ENCODE measurements at regions of chr12 and their contacts with region 1.

Region 1: DNA sequence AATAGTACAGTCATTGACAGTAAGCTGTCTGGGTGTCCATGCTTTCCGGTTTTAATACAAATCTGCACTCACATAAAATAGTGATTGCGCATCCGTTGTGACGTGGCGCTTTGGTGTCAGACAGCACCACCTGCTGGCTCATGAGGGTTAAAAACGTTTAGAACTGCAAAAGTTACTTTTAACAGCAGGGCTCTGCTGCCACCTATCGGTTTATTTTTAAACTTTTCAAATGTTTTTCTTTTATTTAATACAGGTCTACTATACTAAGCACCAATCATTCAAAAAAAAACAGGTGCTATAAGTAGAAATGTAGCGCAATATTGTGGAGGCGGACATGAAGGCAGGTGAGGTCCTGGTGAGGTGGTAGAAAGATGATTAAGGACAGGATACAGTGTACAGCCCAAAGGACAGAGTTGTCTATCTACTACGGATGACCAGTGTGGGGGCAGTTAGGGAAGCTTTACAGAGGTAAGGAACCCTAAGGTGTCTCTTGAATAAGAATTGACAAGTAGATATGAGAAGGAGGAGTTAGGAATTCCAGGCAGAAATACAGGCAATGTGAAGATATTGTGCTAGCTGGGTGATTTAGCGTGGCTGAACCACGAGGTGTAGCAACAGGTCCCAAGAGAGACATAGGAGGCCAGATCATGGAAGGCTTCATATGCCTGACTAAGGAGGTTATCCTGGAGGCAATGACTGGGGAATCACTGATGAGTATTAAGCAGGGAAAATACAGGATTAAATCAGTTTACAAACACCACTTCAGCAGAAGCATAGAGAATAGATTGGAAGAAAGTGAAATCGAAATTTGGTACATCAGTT is 91.5 kb upstream of the PRB2 start:
- DNase-seq: peak; percentile 62 to 90
- ATAC-seq: peak; percentile 80 to 85
- H3K4me3 ChIP-seq: no peak overlapping the region
- H3K27ac ChIP-seq: no peak overlapping the region
- H3K4me1 ChIP-seq: no peaks in the 10 kb centered on the region
- CTCF ChIP-seq: peak; percentile 100
- EP300 ChIP-seq: no peak
- POLR2A ChIP-seq: no peak
- RAD21 ChIP-seq: peak; percentile 97 to 98

Region 2: GRCh38 chr12:10759657-10760056 is 727.2 kb before region 1 on chr12:
- CTCF ChIA-PET with region 1: interaction called, 16 read pairs
- POLR2A ChIA-PET with region 1: no interaction called
- DNase-seq: no peak
- ATAC-seq: no peak
- H3K4me3 ChIP-seq: no peak overlapping the region
- H3K27ac ChIP-seq: no peak overlapping the region
- H3K4me1 ChIP-seq: no peaks in the 10 kb centered on the region
- CTCF ChIP-seq: no peak
- EP300 ChIP-seq: no peak
- POLR2A ChIP-seq: no peak
- RAD21 ChIP-seq: no peak

Region 3: GRCh38 chr12:10771132-10771733 is 715.6 kb before region 1 on chr12:
- CTCF ChIA-PET with region 1: interaction called, 131 read pairs
- POLR2A ChIA-PET with region 1: no interaction called
- DNase-seq: peak; percentile 15 to 44
- ATAC-seq: peak; percentile 68 to 69; a peak in 3 of 6 replicates
- H3K4me3 ChIP-seq: no peak overlapping the region
- H3K27ac ChIP-seq: no peak overlapping the region
- H3K4me1 ChIP-seq: no peaks in the 10 kb centered on the region
- CTCF ChIP-seq: peak; percentile 79
- EP300 ChIP-seq: no peak
- POLR2A ChIP-seq: no peak
- RAD21 ChIP-seq: peak; percentile 87 to 89

Region 4: GRCh38 chr12:10779103-10779502 is 707.7 kb before region 1 on chr12:
- CTCF ChIA-PET with region 1: interaction called, 131 read pairs
- POLR2A ChIA-PET with region 1: no interaction called
- DNase-seq: no peak
- ATAC-seq: no peak
- H3K4me3 ChIP-seq: no peak overlapping the region
- H3K27ac ChIP-seq: no peak overlapping the region
- H3K4me1 ChIP-seq: no peaks in the 10 kb centered on the region
- CTCF ChIP-seq: no peak
- EP300 ChIP-seq: no peak
- POLR2A ChIP-seq: no peak
- RAD21 ChIP-seq: no peak

Region 5: GRCh38 chr12:11202811-11203210 is 284.0 kb before region 1 on chr12:
- CTCF ChIA-PET with region 1: interaction called, 20 read pairs
- POLR2A ChIA-PET with region 1: no interaction called
- DNase-seq: no peak
- ATAC-seq: no peak
- H3K4me3 ChIP-seq: no peak overlapping the region
- H3K27ac ChIP-seq: no peak overlapping the region
- H3K4me1 ChIP-seq: no peaks in the 10 kb centered on the region
- CTCF ChIP-seq: no peak
- EP300 ChIP-seq: no peak
- POLR2A ChIP-seq: no peak
- RAD21 ChIP-seq: no peak

Region 6: DNA sequence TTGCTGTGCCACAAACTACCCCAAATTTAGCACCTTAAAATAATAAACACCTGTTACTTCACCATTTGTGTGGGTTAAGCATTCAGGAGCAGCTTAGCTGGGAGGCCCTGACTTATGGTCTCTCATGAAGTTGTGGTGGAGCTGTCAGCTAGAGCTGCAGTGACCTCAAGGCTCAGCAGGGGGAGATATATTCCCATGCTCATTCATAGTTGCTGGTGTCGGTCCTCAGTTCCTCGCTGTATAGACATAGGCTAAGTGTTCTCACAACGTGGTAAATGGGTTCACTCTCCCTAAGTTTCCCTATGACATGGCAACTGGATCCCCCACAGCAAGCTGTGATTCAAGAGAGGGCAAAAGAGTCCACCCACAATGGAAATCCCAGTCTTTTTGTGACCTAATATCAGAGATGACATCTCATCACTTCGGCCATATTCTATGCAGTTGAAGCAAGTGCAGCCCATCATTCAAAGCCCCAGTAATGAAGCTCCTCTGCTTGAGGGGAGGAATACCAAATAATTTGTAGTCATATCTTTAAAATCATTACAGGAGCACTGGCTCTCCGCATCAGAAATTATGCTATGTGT is 258.4 kb before region 1 on chr12:
- CTCF ChIA-PET with region 1: interaction called, 15 read pairs
- POLR2A ChIA-PET with region 1: no interaction called
- DNase-seq: peak; percentile 20 to 57
- ATAC-seq: peak; percentile 88 to 95; a peak in 5 of 6 replicates
- H3K4me3 ChIP-seq: no peak overlapping the region
- H3K27ac ChIP-seq: no peak overlapping the region
- H3K4me1 ChIP-seq: no peaks in the 10 kb centered on the region
- CTCF ChIP-seq: peak; percentile 39; the same call in 2 of the 3 replicates
- EP300 ChIP-seq: no peak
- POLR2A ChIP-seq: no peak
- RAD21 ChIP-seq: peak; percentile 42 to 78; a peak in 4 of 5 replicates

Region 7: DNA sequence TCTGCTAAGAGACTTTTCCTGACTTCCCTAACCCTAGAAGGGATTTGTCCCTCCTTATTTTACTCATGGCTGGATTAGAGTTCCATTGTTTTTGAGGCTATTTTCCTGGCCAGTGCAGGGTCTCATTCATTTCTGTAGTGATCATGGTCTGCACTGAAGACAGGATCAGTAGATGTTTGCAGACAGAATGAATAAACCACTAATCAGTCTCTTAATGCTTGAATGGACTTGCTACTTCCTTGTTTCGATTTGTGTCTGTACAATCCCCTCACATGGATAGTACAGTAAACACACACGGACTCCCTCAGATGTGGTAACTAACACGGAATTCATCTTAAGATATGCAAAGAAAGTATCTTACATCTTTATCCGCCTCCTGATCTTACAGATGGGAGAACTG is 11.2 kb after region 1 on chr12:
- CTCF ChIA-PET with region 1: interaction called, 29 read pairs
- POLR2A ChIA-PET with region 1: no interaction called
- DNase-seq: no peak
- ATAC-seq: no peak
- H3K4me3 ChIP-seq: no peak overlapping the region
- H3K27ac ChIP-seq: no peak overlapping the region
- H3K4me1 ChIP-seq: no peaks in the 10 kb centered on the region
- CTCF ChIP-seq: no peak
- EP300 ChIP-seq: no peak
- POLR2A ChIP-seq: no peak
- RAD21 ChIP-seq: no peak

Region 8: GRCh38 chr12:11549119-11549518 is 62.3 kb after region 1 on chr12:
- CTCF ChIA-PET with region 1: no interaction called
- POLR2A ChIA-PET with region 1: no interaction called
- DNase-seq: no peak
- ATAC-seq: no peak
- H3K4me3 ChIP-seq: no peak overlapping the region
- H3K27ac ChIP-seq: no peak overlapping the region
- H3K4me1 ChIP-seq: no peaks in the 10 kb centered on the region
- CTCF ChIP-seq: no peak
- EP300 ChIP-seq: no peak
- POLR2A ChIP-seq: no peak
- RAD21 ChIP-seq: no peak

Measured in A549 (cell line).